ENCODE measurements at regions of chr9 and their contacts with region 1.

Region 1: GRCh38 chr9:101311758-101312420 is 72.9 kb downstream of the BAAT start:
- DNase-seq: no peak
- H3K4me3 ChIP-seq: no peak overlapping the region
- H3K27ac ChIP-seq: no peak overlapping the region
- H3K4me1 ChIP-seq: no peaks in the 10 kb centered on the region
- H3K27me3 ChIP-seq: no peaks in the 10 kb centered on the region
- CTCF ChIP-seq: peak in 5 of 6 experiments; percentile 61 to 73 (median 67)
- POLR2A ChIP-seq: no peak

Region 2: DNA sequence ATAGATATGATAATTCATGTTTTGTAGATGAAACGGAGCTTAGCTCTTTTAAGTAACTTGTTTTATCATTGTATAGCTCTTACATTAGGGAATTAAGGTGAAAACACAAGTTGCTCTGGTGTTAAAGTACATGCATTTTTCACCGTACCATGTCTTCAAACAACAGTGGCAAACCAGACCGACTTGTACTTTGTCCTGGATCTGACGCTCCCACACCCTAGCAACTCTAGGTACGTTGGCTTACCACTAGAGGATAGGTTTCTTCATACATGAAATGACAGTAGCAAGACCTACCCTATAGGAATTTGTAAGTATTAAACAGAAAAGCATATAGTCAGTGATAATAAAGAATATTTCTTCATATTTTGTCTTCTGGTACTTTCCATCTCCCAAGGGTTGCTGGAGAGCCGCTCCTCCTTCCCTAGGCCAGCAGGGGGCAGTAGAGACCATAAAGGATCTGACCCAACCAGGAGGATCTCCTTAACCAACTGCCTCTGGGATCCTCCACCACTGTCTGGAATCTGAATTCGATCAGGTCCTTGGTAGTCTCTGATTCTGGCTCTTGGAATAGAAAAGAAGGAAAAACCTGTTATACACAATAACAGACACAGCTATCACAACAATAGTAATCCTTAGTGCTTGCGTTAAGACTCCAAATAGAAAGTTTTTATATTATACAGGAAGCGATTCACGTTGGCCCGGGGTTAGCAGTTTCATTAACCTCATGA is 597.4 kb before region 1 on chr9:
- intact Hi-C with region 1: loop called (anchors 5 kb)
- DNase-seq: peak; percentile 14 to 34
- H3K4me3 ChIP-seq: no peak overlapping the region
- H3K27ac ChIP-seq: no peak overlapping the region
- H3K4me1 ChIP-seq: no peaks in the 10 kb centered on the region
- H3K27me3 ChIP-seq: no peaks in the 10 kb centered on the region
- CTCF ChIP-seq: peak in 5 of 6 experiments; percentile 24 to 59 (median 32)
- POLR2A ChIP-seq: no peak

Region 3: DNA sequence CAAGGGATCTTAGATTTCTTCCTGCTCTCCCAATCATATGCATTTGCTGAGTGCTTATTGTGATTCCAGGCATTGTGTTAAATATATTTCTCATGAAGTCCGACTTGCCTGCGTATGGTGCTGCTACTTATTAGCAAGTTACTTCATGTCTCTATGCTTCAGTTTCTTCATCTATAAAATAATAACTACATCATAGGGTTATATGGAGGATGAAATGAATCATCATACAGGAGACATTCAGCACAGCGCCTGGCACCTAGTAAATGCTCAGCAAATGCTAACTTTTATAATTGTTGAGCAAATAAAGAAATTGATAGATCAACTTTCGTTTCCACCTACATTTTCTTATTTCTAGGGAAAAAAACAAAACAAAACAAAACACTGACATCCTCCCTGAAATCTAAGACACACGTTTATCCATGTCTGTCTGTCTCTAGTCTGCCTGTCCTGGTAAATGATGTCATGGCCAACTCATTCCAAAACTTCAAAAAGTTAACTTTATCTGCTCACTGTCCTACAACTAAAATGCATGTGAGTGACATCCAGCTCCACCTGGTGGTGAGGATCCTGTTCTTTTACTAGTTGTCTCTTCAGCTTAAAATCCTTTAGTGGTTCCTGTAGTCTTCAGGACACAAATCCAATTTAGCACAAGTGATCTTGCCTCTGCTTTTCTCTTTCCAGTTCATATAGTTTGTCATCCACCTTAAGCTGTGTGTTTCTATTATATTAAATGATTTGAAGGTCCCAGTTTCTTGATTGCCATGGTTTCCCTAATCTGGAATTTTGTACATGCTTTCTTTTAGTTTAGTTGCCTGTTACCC is 255.2 kb after region 1 on chr9:
- intact Hi-C with region 1: no loop called
- DNase-seq: no peak
- H3K4me3 ChIP-seq: no peak overlapping the region
- H3K27ac ChIP-seq: no peak overlapping the region
- H3K4me1 ChIP-seq: no peaks in the 10 kb centered on the region
- H3K27me3 ChIP-seq: no peaks in the 10 kb centered on the region
- CTCF ChIP-seq: peak in 1 of 6 experiments; percentile 16
- POLR2A ChIP-seq: no peak

Region 4: DNA sequence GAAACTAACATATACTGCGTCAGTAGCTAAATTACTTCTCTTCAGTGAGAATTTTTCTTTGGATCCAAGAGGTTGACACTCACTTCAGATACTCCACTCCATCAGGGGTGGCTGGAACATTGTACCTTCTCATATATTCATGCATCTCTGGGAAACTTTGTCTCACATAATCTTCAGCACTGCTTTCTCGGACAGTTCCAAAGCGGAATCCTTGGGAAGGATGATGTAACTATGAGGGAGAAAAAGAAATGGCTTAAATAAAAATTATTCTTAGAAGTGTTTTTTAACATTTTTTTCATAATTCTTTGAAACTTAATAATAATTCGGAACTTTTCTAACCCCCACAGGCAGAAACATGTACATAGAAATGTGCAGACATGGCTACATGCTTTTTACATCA is 316.3 kb after region 1 on chr9:
- intact Hi-C with region 1: no loop called
- DNase-seq: no peak
- H3K4me3 ChIP-seq: no peak overlapping the region
- H3K27ac ChIP-seq: no peak overlapping the region
- H3K4me1 ChIP-seq: no peaks in the 10 kb centered on the region
- H3K27me3 ChIP-seq: no peaks in the 10 kb centered on the region
- CTCF ChIP-seq: no peak
- POLR2A ChIP-seq: no peak

Measured in thyroid gland (tissue), 4 donors.